Calu3 (cell line): ENCODE measurements at regions of chr12 and their contacts with region 1.

Region 1: GRCh38 chr12:50338920-50339645 is 55.8 kb upstream of the LIMA1 start:
- DNase-seq: no peak
- H3K4me3 Mint-ChIP-seq: no peak overlapping the region
- H3K27ac Mint-ChIP-seq: no peak overlapping the region
- H3K4me1 Mint-ChIP-seq: no peaks in the 10 kb centered on the region
- H3K27me3 Mint-ChIP-seq: no peaks in the 10 kb centered on the region
- CTCF ChIP-seq: no peak

Region 2: GRCh38 chr12:50458606-50459005 is 119.5 kb after region 1 on chr12:
- CTCF ChIA-PET with region 1: interaction called, 12 read pairs
- intact Hi-C with region 1: no loop called
- DNase-seq: no peak
- H3K4me3 Mint-ChIP-seq: no peak overlapping the region
- H3K27ac Mint-ChIP-seq: no peak overlapping the region
- H3K4me1 Mint-ChIP-seq: no peaks in the 10 kb centered on the region
- H3K27me3 Mint-ChIP-seq: no peaks in the 10 kb centered on the region
- CTCF ChIP-seq: no peak